OCI-LY7 (cell line): ENCODE measurements at regions of chr3 and their contacts with region 1.

Region 1: GRCh38 chr3:172262991-172263608 is 185.2 kb downstream of the GHSR start:
- DNase-seq: no peak
- H3K4me3 ChIP-seq: no peak overlapping the region
- H3K27ac ChIP-seq: no peak overlapping the region
- H3K4me1 ChIP-seq: no peaks in the 10 kb centered on the region
- CTCF ChIP-seq: no peak

Region 2: GRCh38 chr3:172021164-172021563 is 241.9 kb before region 1 on chr3:
- CTCF ChIA-PET with region 1: no interaction called
- POLR2A ChIA-PET with region 1: interaction called, 14 read pairs
- intact Hi-C with region 1: no loop called
- DNase-seq: no peak
- H3K4me3 ChIP-seq: no peak overlapping the region
- H3K27ac ChIP-seq: no peak overlapping the region
- H3K4me1 ChIP-seq: no peaks in the 10 kb centered on the region
- CTCF ChIP-seq: no peak

Region 3: GRCh38 chr3:172228036-172228415 is 35.1 kb before region 1 on chr3:
- CTCF ChIA-PET with region 1: no interaction called
- POLR2A ChIA-PET with region 1: no interaction called
- intact Hi-C with region 1: no loop called
- DNase-seq: no peak
- H3K4me3 ChIP-seq: no peak overlapping the region
- H3K27ac ChIP-seq: no peak overlapping the region
- H3K4me1 ChIP-seq: no peaks in the 10 kb centered on the region
- CTCF ChIP-seq: no peak